Activated B cell treated with CpG ODN at 0.5 μM for 24 hours (primary cell): ENCODE measurements at regions of chr11 and their contacts with region 1.

Region 1: DNA sequence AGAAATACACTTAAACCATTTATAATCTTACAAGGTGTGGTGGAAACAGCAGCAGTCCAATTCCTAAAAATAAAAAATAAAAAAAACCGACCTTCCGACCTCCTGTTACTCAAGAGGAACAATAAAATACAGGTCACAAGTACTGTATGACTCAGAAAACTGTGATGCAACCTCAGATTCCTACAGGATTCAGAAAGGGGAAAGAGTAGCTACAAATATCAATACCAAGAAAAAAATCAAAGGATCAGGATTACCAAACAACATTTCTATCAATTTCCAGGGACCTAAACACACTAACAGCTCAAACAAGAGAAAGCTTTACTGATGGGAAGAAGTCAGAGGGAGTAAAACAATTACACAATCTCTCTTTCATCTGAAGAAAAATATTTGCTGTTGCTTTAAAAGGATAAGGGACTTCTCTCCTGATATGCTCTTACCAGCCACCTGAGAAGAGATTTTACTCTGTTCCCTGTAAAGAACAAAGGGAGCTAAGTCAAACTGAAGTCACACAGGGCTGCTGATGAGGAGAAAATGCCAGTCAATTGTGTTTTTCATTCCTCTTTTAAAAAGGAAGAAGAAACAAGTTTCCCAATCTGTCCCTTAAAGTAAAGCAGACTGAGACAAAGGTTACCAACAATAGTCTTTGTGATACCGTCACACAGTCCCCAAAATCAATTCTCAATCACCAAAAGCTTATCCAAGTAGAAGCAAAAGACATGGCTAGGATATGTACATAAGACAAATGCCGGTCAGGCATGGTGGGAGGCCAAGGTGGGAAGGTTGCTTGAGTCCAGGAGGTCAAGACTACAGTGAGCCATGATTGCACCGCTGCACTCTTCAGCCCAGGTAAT is 39.4 kb downstream of the AMBRA1 start:
- DNase-seq: no peak
- ATAC-seq: no peak
- H3K4me3 Mint-ChIP-seq: no peak overlapping the region
- H3K27ac Mint-ChIP-seq: peak overlapping the region; percentile 27
- H3K4me1 Mint-ChIP-seq: peaks cover 34% of the 10 kb centered on the region
- H3K27me3 Mint-ChIP-seq: no peaks in the 10 kb centered on the region
- CTCF ChIP-seq: no peak

Region 2: GRCh38 chr11:46593550-46594373 is 39.3 kb after region 1 on chr11 and contains the start of gene AMBRA1:
- CTCF ChIA-PET with region 1: no interaction called
- POLR2A ChIA-PET with region 1: no interaction called
- intact Hi-C with region 1: loop called (anchors 5 kb)
- DNase-seq: peak; percentile 77
- ATAC-seq: peak; percentile 93
- H3K4me3 Mint-ChIP-seq: peak within 1 kb of the TSS; percentile 97
- H3K27ac Mint-ChIP-seq: peak within 1 kb of the TSS; percentile 88
- H3K4me1 Mint-ChIP-seq: peaks cover 43% of the 10 kb centered on the region
- H3K27me3 Mint-ChIP-seq: no peaks in the 10 kb centered on the region
- CTCF ChIP-seq: no peak
- total RNA-seq, gene AMBRA1: 35.5 and 39.1 TPM in 2 replicates